A673 (cell line): ENCODE measurements at regions of chr9 and their contacts with region 1.

Region 1: DNA sequence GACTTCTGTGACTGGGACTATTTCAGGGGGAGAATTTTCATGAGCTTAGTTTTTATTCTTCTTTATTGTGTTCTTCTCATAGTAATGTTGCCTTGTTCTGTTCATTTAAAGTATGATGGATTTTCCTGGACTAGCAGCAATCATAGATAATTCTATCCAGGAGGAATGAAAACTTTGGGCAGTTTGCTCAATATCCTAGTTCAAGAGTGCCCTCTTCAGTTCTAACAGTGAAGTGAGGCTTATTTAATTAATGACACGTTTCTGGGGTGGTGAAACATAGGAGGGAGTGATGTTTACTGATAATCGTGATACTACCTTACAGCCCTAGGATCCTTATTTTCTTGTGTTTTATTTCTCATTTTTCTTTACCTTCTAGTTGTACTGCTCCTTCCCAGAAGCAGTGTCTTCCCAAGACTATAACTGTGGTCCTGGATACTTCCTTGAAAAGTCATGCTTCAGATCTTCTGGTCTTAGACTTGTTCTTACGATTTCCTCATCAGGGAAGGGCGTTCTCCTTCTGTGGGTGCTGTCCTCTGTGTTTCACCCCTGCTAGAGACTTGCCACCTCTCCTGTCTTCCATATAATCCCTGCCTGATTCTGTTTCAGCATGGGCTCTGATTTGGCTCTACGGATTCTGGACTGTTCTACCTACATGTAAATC is 57.4 kb downstream of the CFAP95 start:
- DNase-seq: peak; percentile 66
- H3K4me3 ChIP-seq: no peak overlapping the region
- H3K27ac ChIP-seq: no peak overlapping the region
- H3K4me1 ChIP-seq: peaks cover 3% of the 10 kb centered on the region
- H3K27me3 ChIP-seq: no peaks in the 10 kb centered on the region
- CTCF ChIP-seq: peak; percentile 75

Region 2: DNA sequence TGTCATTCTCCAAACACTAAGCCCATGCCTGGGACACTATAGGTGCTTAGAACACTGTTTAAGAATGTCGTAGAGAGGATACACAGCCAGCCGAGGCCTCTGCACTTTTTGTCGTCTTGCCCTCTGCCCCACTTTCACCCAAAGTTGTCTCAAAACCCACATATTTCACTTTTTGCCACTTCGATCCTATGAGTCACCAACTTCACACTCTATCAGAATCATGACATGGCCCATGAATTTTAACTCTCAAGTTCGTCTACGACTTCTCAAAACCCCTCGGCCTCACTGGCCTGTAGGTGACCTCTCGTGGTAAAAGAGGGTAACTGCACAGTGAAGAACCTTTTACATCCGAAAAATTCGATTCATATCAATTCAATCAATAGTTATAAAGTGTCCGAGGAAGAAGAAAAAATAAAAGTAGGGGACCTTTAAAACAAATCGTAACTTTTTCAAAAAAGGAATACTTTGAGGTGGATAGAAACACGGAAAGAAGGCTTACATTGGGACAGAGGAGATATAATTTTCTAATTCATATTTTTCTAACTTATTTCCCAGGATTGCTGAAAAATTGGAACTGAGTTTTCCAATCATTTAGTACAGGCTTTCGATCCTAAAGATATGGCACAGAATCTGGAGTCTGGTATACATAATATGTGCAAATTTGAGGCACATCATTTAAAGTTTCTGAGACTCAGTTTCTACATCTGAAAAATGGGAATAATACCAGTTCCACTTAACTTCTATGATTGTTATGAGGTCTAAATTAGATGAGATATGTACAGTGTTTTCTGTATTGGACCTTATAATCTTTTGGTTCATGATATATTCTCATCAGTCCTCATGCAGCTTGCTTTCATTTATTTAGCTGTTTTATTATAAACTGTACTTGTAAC is 328.4 kb before region 1 on chr9:
- CTCF ChIA-PET with region 1: no interaction called
- POLR2A ChIA-PET with region 1: no interaction called
- intact Hi-C with region 1: loop called (anchors 5 kb)
- DNase-seq: peak; percentile 58
- H3K4me3 ChIP-seq: no peak overlapping the region
- H3K27ac ChIP-seq: no peak overlapping the region
- H3K4me1 ChIP-seq: no peaks in the 10 kb centered on the region
- H3K27me3 ChIP-seq: peaks cover 42% of the 10 kb centered on the region
- CTCF ChIP-seq: peak; percentile 82

Region 3: GRCh38 chr9:69745716-69746437 is 132.1 kb before region 1 on chr9:
- CTCF ChIA-PET with region 1: no interaction called
- POLR2A ChIA-PET with region 1: no interaction called
- intact Hi-C with region 1: loop called (anchors 5 kb)
- DNase-seq: peak; percentile 17
- H3K4me3 ChIP-seq: no peak overlapping the region
- H3K27ac ChIP-seq: no peak overlapping the region
- H3K4me1 ChIP-seq: peaks cover 28% of the 10 kb centered on the region
- H3K27me3 ChIP-seq: no peaks in the 10 kb centered on the region
- CTCF ChIP-seq: peak; percentile 48

Region 4: DNA sequence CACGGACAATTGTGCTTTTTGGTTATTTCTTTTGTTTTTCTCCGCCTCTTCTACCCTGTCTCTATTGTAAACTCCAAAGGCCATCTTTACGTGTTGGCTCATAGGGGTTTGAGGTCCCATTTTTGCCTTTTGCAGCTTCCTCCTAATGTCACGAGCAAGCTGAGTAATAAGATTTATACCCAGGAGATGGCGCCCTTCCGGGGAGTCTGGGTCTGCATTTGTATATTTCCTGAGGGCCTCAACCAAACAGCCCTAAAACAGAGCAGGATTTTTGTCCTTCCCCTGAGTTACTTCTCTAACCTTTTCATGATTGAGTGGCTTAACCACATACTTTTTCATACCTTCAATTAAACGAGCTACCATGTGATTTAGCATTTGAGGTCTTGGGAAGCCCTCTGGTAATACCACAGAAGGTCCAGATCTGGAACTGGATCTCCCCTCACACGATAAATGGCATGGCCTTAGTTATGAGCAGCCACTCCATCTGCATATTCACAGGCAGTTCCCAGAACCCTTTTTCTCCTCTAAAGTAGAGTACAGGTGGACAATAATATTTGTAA is 68.6 kb before region 1 on chr9:
- CTCF ChIA-PET with region 1: no interaction called
- POLR2A ChIA-PET with region 1: no interaction called
- intact Hi-C with region 1: loop called (anchors 1 kb)
- DNase-seq: peak; percentile 74
- H3K4me3 ChIP-seq: no peak overlapping the region
- H3K27ac ChIP-seq: peak overlapping the region; percentile 4
- H3K4me1 ChIP-seq: peaks cover 26% of the 10 kb centered on the region
- H3K27me3 ChIP-seq: no peaks in the 10 kb centered on the region
- CTCF ChIP-seq: peak; percentile 64

Region 5: DNA sequence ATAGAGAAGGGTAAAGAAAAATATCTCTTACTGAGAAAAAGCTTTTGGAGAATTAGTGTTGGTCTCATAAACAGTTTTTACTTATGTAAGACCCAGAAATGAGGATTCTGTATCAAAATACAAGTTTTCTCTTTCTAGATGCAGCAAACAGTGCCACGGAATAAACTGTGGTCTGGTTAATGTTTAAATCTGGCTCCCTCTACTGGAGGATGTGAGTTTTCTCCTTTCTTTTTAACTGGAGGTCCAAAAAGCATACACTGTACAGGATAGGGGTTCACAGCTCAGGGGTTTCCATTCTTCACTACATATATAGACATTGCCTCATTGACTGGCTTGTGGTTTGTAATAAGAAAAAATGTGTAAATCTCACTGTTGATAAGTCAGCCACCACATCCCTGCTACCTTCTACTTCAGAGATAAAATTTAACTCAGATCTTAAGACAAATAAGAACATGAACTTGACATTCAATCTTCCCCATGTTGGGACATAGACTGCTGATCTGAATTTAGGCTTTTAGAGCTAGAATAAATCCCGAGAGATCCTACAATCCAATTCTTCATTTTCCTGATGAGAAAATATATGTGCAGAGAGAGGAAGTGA is 41.6 kb after region 1 on chr9:
- CTCF ChIA-PET with region 1: no interaction called
- POLR2A ChIA-PET with region 1: no interaction called
- intact Hi-C with region 1: loop called (anchors 2 kb)
- DNase-seq: peak; percentile 78
- H3K4me3 ChIP-seq: no peak overlapping the region
- H3K27ac ChIP-seq: no peak overlapping the region
- H3K4me1 ChIP-seq: no peaks in the 10 kb centered on the region
- H3K27me3 ChIP-seq: peaks cover 26% of the 10 kb centered on the region
- CTCF ChIP-seq: peak; percentile 77